ENCODE measurements at regions of chr3 and their contacts with region 1.

Region 1: DNA sequence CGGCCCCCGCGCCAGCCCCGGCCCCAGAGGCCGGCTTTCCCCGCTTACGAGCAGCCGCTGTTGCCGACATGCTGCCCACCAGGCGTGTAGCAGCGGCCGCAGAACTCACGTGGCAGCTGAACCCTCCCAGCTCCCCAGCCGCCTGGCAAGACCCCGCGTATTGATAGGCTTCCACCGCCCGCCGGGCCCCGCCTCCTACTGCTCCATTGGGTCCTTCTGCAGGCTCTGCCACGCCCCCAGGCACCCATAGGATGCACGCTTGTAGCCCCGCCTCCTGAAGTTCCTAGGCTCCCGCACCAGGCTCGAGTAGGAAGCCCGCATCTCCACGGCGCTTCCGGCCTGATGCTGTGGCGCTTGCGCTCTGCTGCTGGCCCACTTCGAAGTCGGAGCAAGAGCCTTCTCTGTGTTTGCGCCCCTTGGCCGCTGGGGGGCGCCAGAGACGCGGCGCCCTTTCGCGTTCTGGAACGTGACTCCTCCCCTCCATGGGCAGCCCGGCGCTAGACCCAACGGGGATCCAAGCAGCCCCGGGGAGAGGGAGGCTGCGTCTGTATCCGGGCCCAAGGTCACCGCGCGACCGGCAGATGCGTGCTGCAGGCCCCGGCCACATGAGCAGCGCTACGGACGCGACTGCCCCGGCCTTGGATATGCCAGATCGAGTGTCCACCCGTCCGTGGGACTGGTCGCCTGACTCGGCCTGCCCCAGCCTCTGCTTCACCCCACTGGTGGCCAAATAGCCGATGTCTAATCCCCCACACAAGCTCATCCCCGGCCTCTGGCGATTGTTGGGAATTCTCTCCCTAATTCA is at the starts of genes PARP3 and RRP9:
- DNase-seq: peak; percentile 100
- H3K4me3 Mint-ChIP-seq: peak within 1 kb of the TSS; percentile 85
- H3K27ac Mint-ChIP-seq: peak within 1 kb of the TSS; percentile 91
- H3K4me1 Mint-ChIP-seq: peaks cover 26% of the 10 kb centered on the region
- H3K27me3 Mint-ChIP-seq: no peaks in the 10 kb centered on the region
- total RNA-seq, gene PARP3: 17.0 and 17.5 TPM in 2 replicates
- total RNA-seq, gene RRP9: 92.3 and 95.5 TPM in 2 replicates

Region 2: GRCh38 chr3:51538459-51539290 is 403.3 kb before region 1 on chr3 and contains the start of gene RAD54L2:
- intact Hi-C with region 1: loop called (anchors 5 kb)
- DNase-seq: peak; percentile 94
- H3K4me3 Mint-ChIP-seq: peak within 1 kb of the TSS; percentile 82
- H3K27ac Mint-ChIP-seq: peak within 1 kb of the TSS; percentile 93
- H3K4me1 Mint-ChIP-seq: peaks cover 25% of the 10 kb centered on the region
- H3K27me3 Mint-ChIP-seq: no peaks in the 10 kb centered on the region
- total RNA-seq, gene RAD54L2: 43.0 and 44.0 TPM in 2 replicates

Region 3: DNA sequence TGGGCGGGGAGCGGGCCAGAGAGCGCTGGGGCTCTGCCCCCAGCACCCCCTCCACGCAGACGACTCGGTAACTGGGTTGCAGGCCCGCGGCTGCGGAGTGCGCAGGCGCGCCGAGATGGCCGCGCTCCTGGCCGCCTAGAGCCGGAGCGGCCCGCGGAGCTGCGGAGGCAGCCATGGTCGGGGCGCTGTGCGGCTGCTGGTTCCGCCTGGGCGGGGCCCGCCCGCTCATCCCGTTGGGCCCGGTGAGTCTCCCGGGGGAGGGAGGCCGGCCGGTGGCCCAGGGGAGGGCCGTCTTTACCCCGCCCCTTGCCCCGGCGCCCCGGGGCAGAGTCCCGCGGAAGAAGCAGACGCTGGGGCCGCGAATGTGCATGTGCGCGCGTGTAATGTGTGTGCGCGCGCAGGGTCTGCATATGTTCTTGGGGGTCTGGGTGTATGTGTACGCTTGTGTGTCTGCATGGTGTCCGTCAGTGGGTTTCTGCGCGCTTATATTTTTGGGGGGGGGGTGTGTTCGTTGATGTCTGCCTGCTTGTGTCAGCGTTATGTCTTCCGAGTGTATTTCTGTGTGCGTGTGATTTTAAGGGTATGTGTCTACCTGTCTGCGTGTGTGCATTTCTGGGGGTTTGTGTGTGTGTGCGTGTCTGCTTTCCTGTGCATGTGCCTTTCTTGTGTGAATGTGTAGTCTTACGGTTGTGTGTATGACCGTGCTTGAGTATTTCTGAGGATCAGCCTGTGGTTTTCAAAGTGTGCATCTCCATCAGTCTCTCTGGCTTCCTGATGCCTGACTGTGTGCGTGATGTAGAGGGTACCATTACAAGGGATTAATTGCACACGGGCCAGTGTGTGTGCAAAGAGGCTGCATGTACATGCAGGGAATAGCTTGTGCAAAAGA is 33.2 kb after region 1 on chr3 and contains the start of gene ABHD14A:
- intact Hi-C with region 1: loop called (anchors 1 kb)
- DNase-seq: peak; percentile 94
- H3K4me3 Mint-ChIP-seq: peak within 1 kb of the TSS; percentile 87
- H3K27ac Mint-ChIP-seq: peak within 1 kb of the TSS; percentile 96
- H3K4me1 Mint-ChIP-seq: peaks cover 17% of the 10 kb centered on the region
- H3K27me3 Mint-ChIP-seq: no peaks in the 10 kb centered on the region
- total RNA-seq, gene ABHD14A: 12.3 and 13.8 TPM in 2 replicates

Region 4: GRCh38 chr3:51995346-51996163 is 53.6 kb after region 1 on chr3 and contains the start of gene RPL29:
- intact Hi-C with region 1: loop called (anchors 1 kb)
- DNase-seq: peak; percentile 98
- H3K4me3 Mint-ChIP-seq: peak within 1 kb of the TSS; percentile 90
- H3K27ac Mint-ChIP-seq: peak within 1 kb of the TSS; percentile 97
- H3K4me1 Mint-ChIP-seq: peaks cover 20% of the 10 kb centered on the region
- H3K27me3 Mint-ChIP-seq: peaks cover 16% of the 10 kb centered on the region
- total RNA-seq, gene RPL29: 1,714 and 1,721 TPM in 2 replicates

Region 5: GRCh38 chr3:52144034-52144795 is 202.2 kb after region 1 on chr3:
- intact Hi-C with region 1: loop called (anchors 1 kb)
- DNase-seq: peak; percentile 95
- H3K4me3 Mint-ChIP-seq: no peak overlapping the region
- H3K27ac Mint-ChIP-seq: peak overlapping the region; percentile 40
- H3K4me1 Mint-ChIP-seq: peaks cover 5% of the 10 kb centered on the region
- H3K27me3 Mint-ChIP-seq: no peaks in the 10 kb centered on the region

Measured in activated CD4-positive, alpha-beta T cell treated with anti-CD3 and anti-CD28 coated beads, Interleukin-2, amount 10 ng/mL, durations not matched to agents 24 days and 14 days (primary cell).